ENCODE measurements at regions of chr4 and their contacts with region 1.

Region 1: DNA sequence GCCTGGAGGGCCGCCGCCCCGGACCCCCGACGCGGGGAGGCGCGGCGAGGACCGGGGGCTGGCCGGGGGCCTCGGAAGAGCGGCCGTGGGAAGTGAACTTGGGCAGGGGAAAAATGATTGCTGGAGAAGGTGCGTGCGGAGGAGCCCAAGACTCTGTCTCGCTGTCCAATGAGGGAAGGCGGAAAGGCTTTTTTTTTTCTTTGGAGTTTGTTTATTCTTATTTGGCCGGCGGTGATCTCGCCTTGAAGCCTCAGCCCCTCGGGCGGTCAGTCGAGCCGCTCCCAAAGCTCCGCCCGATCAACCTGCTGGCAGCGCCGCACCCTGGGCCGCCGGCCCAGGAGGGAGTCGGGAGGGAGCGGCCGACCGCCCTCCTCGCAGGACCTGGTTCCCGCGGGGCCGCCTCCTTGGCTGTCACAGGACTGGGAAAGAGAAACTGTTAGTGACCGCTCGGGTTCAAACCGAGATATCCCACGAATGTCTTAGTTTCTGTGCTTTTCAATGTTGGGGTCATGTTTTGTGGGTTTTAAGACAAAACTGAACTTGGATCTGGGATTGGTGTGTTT is 2.5 kb downstream of the CPEB2 start:
- DNase-seq: peak; percentile 55
- H3K4me3 Mint-ChIP-seq: peak overlapping the region; percentile 88
- H3K27ac Mint-ChIP-seq: peak overlapping the region; percentile 97
- H3K4me1 Mint-ChIP-seq: peaks cover 37% of the 10 kb centered on the region
- H3K27me3 Mint-ChIP-seq: no peaks in the 10 kb centered on the region

Region 2: GRCh38 chr4:14952352-14952751 is 52.5 kb before region 1 on chr4:
- CTCF ChIA-PET with region 1: no interaction called
- POLR2A ChIA-PET with region 1: interaction called, 10 read pairs
- DNase-seq: no peak
- H3K4me3 Mint-ChIP-seq: no peak overlapping the region
- H3K27ac Mint-ChIP-seq: no peak overlapping the region
- H3K4me1 Mint-ChIP-seq: no peaks in the 10 kb centered on the region
- H3K27me3 Mint-ChIP-seq: peaks cover 10% of the 10 kb centered on the region

Region 3: GRCh38 chr4:15117270-15117946 is 112.6 kb after region 1 on chr4:
- CTCF ChIA-PET with region 1: no interaction called
- POLR2A ChIA-PET with region 1: no interaction called
- DNase-seq: no peak
- H3K4me3 Mint-ChIP-seq: no peak overlapping the region
- H3K27ac Mint-ChIP-seq: no peak overlapping the region
- H3K4me1 Mint-ChIP-seq: no peaks in the 10 kb centered on the region
- H3K27me3 Mint-ChIP-seq: peaks cover under 1% of the 10 kb centered on the region